HepG2 (cell line): ENCODE measurements at regions of chr6 and their contacts with region 1.

Region 1: DNA sequence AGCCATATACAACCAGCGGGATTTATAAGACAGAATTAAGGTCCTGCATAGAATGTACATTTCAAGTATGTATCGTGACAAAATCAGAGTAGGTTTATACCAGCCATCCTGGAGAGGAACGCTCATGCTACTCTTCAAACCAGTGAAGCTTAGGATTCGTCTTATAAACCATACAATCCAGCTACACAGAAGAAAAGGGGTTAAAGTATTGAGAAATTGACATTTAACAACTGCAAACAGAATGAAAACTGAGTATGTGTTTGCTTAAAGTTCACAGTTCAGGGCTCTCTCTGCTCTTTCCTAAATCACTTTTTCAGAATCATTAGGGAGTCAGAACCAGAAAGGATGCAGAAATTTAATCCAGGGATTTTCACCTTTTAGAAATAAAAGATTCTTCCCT is 17.9 kb downstream of the ADAT2 start:
- DNase-seq: peak; percentile 79
- ATAC-seq: peak; percentile 95
- H3K4me3 ChIP-seq: peak overlapping the region in 1 of 3 experiments; percentile 29; a peak in 1 of 6 replicates
- H3K27ac ChIP-seq: peak overlapping the region; percentile 44
- H3K4me1 ChIP-seq: peaks cover 35% of the 10 kb centered on the region
- H3K27me3 ChIP-seq: no peaks in the 10 kb centered on the region
- CTCF ChIP-seq: no peak
- EP300 ChIP-seq: peak in 1 of 2 experiments; percentile 84; a peak in 2 of 4 replicates
- POLR2A ChIP-seq: no peak
- RAD21 ChIP-seq: 0 out of 2 replicates have a peak, but pooled peaks have one; percentile 32

Region 2: GRCh38 chr6:143450453-143451371 is 18.1 kb after region 1 on chr6 and contains the starts of genes ADAT2 and PEX3:
- CTCF ChIA-PET with region 1: no interaction called
- POLR2A ChIA-PET with region 1: interaction called, 18 read pairs
- in situ Hi-C with region 1: no loop called
- intact Hi-C with region 1: loop called (anchors 1 kb)
- DNase-seq: peak; percentile 93
- ATAC-seq: peak; percentile 99
- H3K4me3 ChIP-seq: peak within 1 kb of the TSS; percentile 73 to 96 (median 92)
- H3K27ac ChIP-seq: peak within 1 kb of the TSS; percentile 86
- H3K4me1 ChIP-seq: peaks cover 36% of the 10 kb centered on the region
- H3K27me3 ChIP-seq: no peaks in the 10 kb centered on the region; a peak in 2 of 5 replicates
- CTCF ChIP-seq: peak; percentile 39; the same call in 1 of the 2 replicates
- EP300 ChIP-seq: peak; percentile 66 to 87; a peak in 3 of 4 replicates
- POLR2A ChIP-seq: peak; percentile 90 to 91
- RAD21 ChIP-seq: peak; percentile 91
- total RNA-seq, gene ADAT2: 15.0 and 18.3 TPM in 2 replicates
- total RNA-seq, gene PEX3: 40.8 and 50.5 TPM in 2 replicates

Region 3: DNA sequence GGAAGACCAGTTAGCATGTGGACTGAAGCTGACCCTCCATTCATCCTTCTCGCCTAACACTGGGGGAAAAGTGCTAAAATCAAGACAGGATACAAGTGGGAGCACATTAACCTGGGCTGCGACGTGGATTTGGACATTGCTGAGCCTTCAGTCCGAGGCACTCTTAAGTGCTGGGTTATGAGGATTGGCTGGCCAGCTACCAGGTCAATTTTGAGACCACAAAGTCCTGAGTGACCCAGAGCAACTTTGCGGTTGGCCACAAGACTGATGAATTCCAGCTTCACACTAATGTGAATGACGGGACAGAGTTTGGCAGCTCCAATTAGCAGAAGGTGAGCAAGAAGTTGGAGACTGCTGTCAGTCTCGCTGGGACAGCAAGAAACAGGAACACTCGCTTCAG is 58.2 kb after region 1 on chr6:
- CTCF ChIA-PET with region 1: no interaction called
- POLR2A ChIA-PET with region 1: no interaction called
- in situ Hi-C with region 1: no loop called
- intact Hi-C with region 1: no loop called
- DNase-seq: no peak
- ATAC-seq: peak; percentile 50
- H3K4me3 ChIP-seq: no peak overlapping the region
- H3K27ac ChIP-seq: no peak overlapping the region
- H3K4me1 ChIP-seq: no peaks in the 10 kb centered on the region
- H3K27me3 ChIP-seq: no peaks in the 10 kb centered on the region
- CTCF ChIP-seq: no peak
- EP300 ChIP-seq: no peak
- POLR2A ChIP-seq: no peak
- RAD21 ChIP-seq: no peak